Activated naive CD4-positive, alpha-beta T cell treated with anti-CD3 and anti-CD28 coated beads for 36 hours (primary cell): ENCODE measurements at regions of chr17 and their contacts with region 1.

Region 1: GRCh38 chr17:61168468-61168867 is 231.2 kb upstream of the TBX2 start:
- DNase-seq: no peak
- H3K4me3 Mint-ChIP-seq: no peak overlapping the region
- H3K27ac Mint-ChIP-seq: no peak overlapping the region
- H3K4me1 Mint-ChIP-seq: peaks cover 1% of the 10 kb centered on the region
- H3K27me3 Mint-ChIP-seq: no peaks in the 10 kb centered on the region

Region 2: GRCh38 chr17:61106354-61106753 is 62.1 kb before region 1 on chr17:
- CTCF ChIA-PET with region 1: no interaction called
- intact Hi-C with region 1: loop called (anchors 10 kb)
- DNase-seq: no peak
- H3K4me3 Mint-ChIP-seq: no peak overlapping the region
- H3K27ac Mint-ChIP-seq: no peak overlapping the region
- H3K4me1 Mint-ChIP-seq: peaks cover 2% of the 10 kb centered on the region
- H3K27me3 Mint-ChIP-seq: no peaks in the 10 kb centered on the region